MCF 10A (cell line): ENCODE measurements at regions of chr13 and their contacts with region 1.

Region 1: GRCh38 chr13:102596147-102597028 is at the start of gene TPP2:
- DNase-seq: peak; percentile 97
- H3K4me3 Mint-ChIP-seq: peak within 1 kb of the TSS; percentile 82
- H3K27ac Mint-ChIP-seq: peak within 1 kb of the TSS; percentile 96
- H3K4me1 Mint-ChIP-seq: peaks cover 42% of the 10 kb centered on the region
- H3K27me3 Mint-ChIP-seq: no peaks in the 10 kb centered on the region
- CTCF ChIP-seq: no peak
- total RNA-seq, gene TPP2: 35.1 and 44.2 TPM in 2 replicates

Region 2: GRCh38 chr13:102580552-102581169 is 15.7 kb before region 1 on chr13:
- CTCF ChIA-PET with region 1: interaction called, 16 read pairs
- POLR2A ChIA-PET with region 1: interaction called, 23 read pairs
- intact Hi-C with region 1: no loop called
- DNase-seq: peak; percentile 74
- H3K4me3 Mint-ChIP-seq: no peak overlapping the region
- H3K27ac Mint-ChIP-seq: no peak overlapping the region
- H3K4me1 Mint-ChIP-seq: peaks cover 5% of the 10 kb centered on the region
- H3K27me3 Mint-ChIP-seq: peaks cover 13% of the 10 kb centered on the region
- CTCF ChIP-seq: peak; percentile 67

Region 3: GRCh38 chr13:102707465-102707864 is 111.1 kb after region 1 on chr13:
- CTCF ChIA-PET with region 1: no interaction called
- POLR2A ChIA-PET with region 1: interaction called, 14 read pairs
- intact Hi-C with region 1: no loop called
- DNase-seq: peak; percentile 80
- H3K4me3 Mint-ChIP-seq: peak overlapping the region; percentile 15
- H3K27ac Mint-ChIP-seq: peak overlapping the region; percentile 70
- H3K4me1 Mint-ChIP-seq: peaks cover 43% of the 10 kb centered on the region
- H3K27me3 Mint-ChIP-seq: no peaks in the 10 kb centered on the region
- CTCF ChIP-seq: no peak

Region 4: DNA sequence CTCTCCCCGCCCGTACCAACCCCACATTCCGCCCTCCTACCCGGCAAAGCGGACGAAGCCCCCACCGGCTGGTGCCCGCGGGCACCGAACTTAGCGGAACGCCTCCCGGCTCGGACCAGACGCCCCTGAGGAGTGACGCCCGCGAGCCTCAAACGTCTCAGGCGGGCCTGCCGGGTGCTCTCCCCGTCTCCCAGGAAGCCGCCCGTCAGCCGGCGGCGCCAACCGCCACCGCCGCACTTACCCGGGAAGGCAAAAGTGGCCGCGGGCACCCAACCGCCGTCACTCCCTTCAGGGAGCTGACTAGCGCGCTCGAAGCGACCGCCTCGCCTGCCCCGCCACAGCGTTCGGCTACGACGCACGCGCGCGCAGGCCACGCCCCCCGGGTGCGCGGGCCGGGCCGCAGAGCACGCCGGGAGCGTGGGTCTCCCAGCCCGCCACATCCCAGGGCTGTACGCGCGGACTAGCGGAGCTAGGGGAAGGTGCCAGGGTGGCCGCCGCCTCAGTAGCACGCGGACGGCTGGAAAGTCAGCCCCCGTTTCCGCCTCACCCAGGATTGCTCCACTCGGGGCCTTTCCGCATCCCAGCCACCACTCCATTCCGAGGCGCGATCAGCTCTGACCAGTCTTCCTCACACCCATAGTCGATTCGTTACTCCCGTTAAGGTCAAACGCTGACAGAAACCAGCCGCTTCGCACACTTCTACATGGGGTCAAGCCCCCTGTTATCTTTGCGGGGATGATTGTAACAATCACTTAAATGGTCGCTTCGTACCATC is 177.2 kb after region 1 on chr13 and contains the start of gene TEX30:
- CTCF ChIA-PET with region 1: interaction called, 15 read pairs
- POLR2A ChIA-PET with region 1: interaction called, 26 read pairs
- intact Hi-C with region 1: loop called (anchors 2 kb)
- DNase-seq: peak; percentile 79
- H3K4me3 Mint-ChIP-seq: peak within 1 kb of the TSS; percentile 80
- H3K27ac Mint-ChIP-seq: peak within 1 kb of the TSS; percentile 87
- H3K4me1 Mint-ChIP-seq: peaks cover 18% of the 10 kb centered on the region
- H3K27me3 Mint-ChIP-seq: no peaks in the 10 kb centered on the region
- CTCF ChIP-seq: no peak
- total RNA-seq, gene TEX30: 10.7 and 14.2 TPM in 2 replicates

Region 5: GRCh38 chr13:102825921-102826706 is 229.7 kb after region 1 on chr13:
- CTCF ChIA-PET with region 1: interaction called, 4 read pairs
- POLR2A ChIA-PET with region 1: interaction called, 13 read pairs
- intact Hi-C with region 1: loop called (anchors 2 kb)
- DNase-seq: peak; percentile 91
- H3K4me3 Mint-ChIP-seq: peak overlapping the region; percentile 72
- H3K27ac Mint-ChIP-seq: peak overlapping the region; percentile 82
- H3K4me1 Mint-ChIP-seq: peaks cover 24% of the 10 kb centered on the region
- H3K27me3 Mint-ChIP-seq: no peaks in the 10 kb centered on the region
- CTCF ChIP-seq: peak; percentile 9